Spleen (tissue), 13 donors: ENCODE measurements at regions of chr17 and their contacts with region 1.

Region 1: GRCh38 chr17:20121359-20122253 is 112.4 kb downstream of the SPECC1 start:
- DNase-seq: peak; percentile 79
- H3K4me3 ChIP-seq: no peak overlapping the region
- H3K27ac ChIP-seq: no peak overlapping the region
- H3K4me1 ChIP-seq: peaks cover 0 to 24% (median 12%) of the 10 kb centered on the region in 6 donors
- H3K27me3 ChIP-seq: no peaks in the 10 kb centered on the region
- CTCF ChIP-seq: peak in 10 of 11 experiments; percentile 60 to 91 (median 84)
- POLR2A ChIP-seq: no peak

Region 2: DNA sequence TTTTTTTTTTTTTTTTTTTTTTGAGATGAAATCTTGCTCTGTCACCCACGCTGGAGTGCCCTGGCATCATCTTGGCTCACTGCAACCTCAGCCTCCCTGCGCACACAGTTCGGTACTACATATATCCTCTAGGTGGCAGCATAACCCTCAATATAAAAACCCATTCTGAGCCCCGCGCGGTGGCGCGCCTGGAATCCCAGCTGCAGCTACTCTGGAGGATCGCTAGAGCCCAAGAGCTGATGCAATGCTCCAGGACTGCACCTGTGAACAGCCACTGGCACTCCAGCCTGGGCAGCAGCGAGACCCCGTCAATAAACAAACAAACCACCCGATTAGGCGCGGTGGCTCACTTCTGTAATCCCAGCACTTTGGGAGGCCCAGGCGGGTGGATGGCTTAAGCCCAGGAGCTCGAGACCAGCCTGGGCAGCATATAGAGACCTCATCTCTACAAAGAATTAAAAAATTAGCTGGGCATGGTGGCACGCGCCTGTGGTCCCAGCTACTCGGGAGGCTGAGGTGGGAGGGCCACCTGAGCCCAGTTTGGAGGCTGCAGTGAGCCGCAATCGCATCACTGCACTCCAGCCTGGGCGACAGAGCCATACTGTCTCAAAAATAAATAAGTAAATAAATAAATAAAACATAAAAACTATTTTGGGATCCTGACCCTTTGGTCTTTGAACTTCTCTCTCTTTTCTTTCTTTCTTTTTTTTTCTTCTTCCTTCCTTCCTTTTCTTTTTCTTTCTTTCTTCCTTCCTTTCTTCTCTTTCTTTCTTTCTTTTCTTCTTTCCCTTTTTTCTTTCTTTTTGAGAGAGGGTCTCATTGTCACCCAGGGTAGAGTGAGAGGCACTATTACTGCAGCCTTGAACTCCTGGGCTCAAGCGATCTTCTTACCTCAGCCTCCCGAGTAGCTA is 128.5 kb before region 1 on chr17:
- intact Hi-C with region 1: loop called (anchors 5 kb)
- DNase-seq: peak; percentile 93
- H3K4me3 ChIP-seq: peak overlapping the region in 1 of 8 donors; percentile 45
- H3K27ac ChIP-seq: no peak overlapping the region
- H3K4me1 ChIP-seq: peaks cover 3 to 25% (median 12%) of the 10 kb centered on the region in 6 donors
- H3K27me3 ChIP-seq: peaks cover 0 to 12% (median 0%) of the 10 kb centered on the region in 7 donors
- CTCF ChIP-seq: peak; percentile 74 to 92 (median 83)
- POLR2A ChIP-seq: no peak

Region 3: GRCh38 chr17:20028443-20028842 is 93.2 kb before region 1 on chr17:
- intact Hi-C with region 1: no loop called
- DNase-seq: no peak
- H3K4me3 ChIP-seq: no peak overlapping the region
- H3K27ac ChIP-seq: no peak overlapping the region
- H3K4me1 ChIP-seq: no peaks in the 10 kb centered on the region
- H3K27me3 ChIP-seq: no peaks in the 10 kb centered on the region
- CTCF ChIP-seq: no peak
- POLR2A ChIP-seq: no peak

Region 4: DNA sequence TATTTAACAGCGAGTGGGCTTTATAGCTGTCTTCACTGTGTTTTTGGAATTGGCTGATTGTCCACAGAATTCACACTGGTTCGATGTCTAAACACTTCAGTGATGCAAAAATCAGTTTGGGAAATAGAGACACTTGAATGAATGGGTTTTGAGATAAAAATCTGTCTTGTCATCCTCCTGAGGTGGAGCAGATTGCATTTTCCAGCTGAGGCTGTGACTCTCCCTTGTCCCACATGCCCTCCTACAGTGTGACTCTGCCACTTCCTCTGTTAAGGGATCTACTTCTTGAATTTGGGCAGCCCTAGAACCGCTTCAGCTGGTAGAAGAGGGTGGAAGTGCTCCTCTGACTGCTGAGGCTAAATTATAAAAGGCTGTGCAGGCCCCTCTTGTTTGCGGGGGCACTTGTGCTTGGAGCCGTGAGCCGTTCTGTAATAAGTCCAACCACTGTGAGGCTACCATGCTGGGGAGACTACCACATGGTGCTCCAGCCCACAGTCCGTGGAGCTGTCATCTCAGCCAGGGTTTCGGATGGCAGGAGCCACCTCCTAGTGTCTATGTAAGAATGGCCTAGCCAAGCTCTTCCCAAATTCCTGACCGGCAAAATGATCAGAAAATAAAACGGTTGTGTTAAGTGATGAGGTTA is 63.5 kb after region 1 on chr17:
- intact Hi-C with region 1: no loop called
- DNase-seq: no peak
- H3K4me3 ChIP-seq: no peak overlapping the region
- H3K27ac ChIP-seq: peak overlapping the region in 3 of 8 donors; percentile 28 to 52 (median 44)
- H3K4me1 ChIP-seq: peaks cover 0 to 18% (median 4%) of the 10 kb centered on the region in 6 donors
- H3K27me3 ChIP-seq: no peaks in the 10 kb centered on the region
- CTCF ChIP-seq: no peak
- POLR2A ChIP-seq: no peak

Region 5: DNA sequence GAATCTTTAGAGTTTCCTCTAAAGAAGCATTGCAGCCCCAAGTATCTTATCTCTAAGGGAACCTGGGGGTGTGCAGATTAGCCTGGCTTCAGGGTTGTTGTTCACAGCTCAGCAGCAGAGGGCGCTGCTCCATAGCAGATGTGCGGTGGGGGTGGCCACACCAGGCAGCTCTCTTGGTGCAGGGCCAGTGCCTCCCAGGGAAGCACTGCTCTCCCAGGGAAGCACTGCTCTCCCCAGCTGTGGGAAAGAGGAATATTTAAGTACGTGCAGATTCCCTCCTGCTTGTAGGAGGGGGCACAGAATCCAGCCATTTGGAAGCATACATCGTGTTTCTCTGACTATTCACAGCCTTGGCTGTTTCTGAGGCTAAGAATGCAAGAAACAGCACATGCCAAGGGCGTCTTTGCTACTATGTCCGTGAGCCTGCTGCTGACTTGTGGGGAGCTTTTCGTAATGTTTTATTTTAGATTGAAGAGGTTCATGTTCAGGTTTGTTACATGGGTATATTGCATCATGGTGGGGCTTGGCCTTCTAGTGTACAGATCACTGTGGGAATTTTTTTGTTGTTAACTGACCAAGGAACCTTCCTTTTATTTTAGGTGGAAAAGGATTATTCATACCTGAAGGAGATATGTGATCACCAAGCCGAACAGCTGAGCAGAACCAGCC is 105.3 kb after region 1 on chr17:
- intact Hi-C with region 1: loop called (anchors 5 kb)
- DNase-seq: peak; percentile 89
- H3K4me3 ChIP-seq: no peak overlapping the region
- H3K27ac ChIP-seq: no peak overlapping the region
- H3K4me1 ChIP-seq: peaks cover 0 to 11% (median 0%) of the 10 kb centered on the region in 6 donors
- H3K27me3 ChIP-seq: no peaks in the 10 kb centered on the region
- CTCF ChIP-seq: peak; percentile 55 to 85 (median 75)
- POLR2A ChIP-seq: no peak

Region 6: GRCh38 chr17:20315821-20316220 is 194.2 kb after region 1 on chr17:
- intact Hi-C with region 1: loop called (anchors 5 kb)
- DNase-seq: no peak
- H3K4me3 ChIP-seq: no peak overlapping the region
- H3K27ac ChIP-seq: no peak overlapping the region
- H3K4me1 ChIP-seq: peaks cover 0 to 8% (median 5%) of the 10 kb centered on the region in 6 donors
- H3K27me3 ChIP-seq: peaks cover 0 to 6% (median 0%) of the 10 kb centered on the region in 7 donors
- CTCF ChIP-seq: no peak
- POLR2A ChIP-seq: no peak